Lower lobe of right lung (tissue), 2 donors: ENCODE measurements at regions of chr7 and their contacts with region 1.

Region 1: DNA sequence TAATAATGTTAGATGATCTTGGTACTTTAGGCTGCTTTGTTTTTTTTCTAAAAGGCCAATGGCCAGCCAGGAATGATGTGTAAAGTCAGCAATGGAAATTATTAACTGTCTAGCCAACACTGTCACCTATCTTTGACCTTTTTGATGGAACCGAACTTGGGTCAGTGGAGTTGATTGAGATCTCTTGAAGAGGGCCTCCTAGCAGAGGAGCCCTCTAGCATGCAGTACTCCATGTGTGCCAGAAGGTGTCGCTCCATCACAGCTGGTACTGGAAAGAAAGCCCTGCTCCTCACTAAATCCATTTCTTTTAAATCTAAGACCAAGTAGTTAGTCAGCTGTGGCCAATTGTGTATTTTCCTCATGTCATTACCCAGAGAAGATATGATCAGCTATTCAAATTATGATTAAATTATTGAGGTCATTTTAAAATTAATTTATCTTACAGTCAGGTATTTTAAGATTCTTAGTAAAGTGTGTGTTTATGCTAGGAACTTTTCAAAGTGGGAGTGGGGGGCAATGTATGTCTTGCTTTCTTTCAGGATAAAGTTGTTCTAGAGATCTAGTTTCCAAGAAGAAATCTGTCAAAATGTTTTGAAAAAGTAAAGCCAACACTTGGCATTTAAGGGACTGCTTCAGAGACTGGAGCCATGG is 33.1 kb upstream of the CROT start:
- DNase-seq: no peak
- ATAC-seq: peak; percentile 80 to 92
- H3K4me3 ChIP-seq: no peak overlapping the region
- H3K27ac ChIP-seq: no peak overlapping the region
- H3K4me1 ChIP-seq: no peaks in the 10 kb centered on the region
- H3K27me3 ChIP-seq: no peaks in the 10 kb centered on the region
- CTCF ChIP-seq: peak; percentile 85

Region 2: DNA sequence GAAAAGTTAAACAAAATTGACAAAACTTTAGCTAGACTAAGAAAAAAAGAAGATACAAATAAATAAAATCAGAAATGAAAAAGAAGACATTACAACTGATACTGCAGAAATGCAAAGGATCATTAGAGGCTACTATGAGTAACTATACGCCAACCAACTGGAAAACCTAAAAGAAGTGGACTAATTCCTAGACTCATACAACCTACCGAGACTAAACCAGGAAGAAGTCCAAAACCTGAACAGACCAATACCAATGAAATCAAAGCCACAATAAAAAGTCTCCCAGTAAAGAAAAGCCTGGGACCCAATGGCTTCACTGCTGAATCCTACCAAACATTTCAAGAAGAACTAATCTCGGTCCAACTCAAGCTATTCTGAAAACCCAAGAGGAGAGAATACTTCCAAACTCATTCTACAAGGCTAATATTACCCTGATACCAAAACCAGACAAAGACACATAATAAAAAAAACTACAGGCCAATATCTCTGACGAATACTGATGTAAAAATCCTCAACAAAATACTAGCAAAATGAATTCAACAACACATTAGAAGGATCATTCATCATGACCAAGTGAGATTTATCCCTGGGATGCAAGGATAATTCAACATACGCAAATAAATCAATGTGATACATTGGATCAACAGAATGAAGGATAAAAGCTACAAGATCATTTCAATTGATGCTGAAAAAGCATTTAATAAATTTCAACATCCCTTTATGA is 273.2 kb before region 1 on chr7:
- intact Hi-C with region 1: no loop called
- DNase-seq: no peak
- ATAC-seq: no peak
- H3K4me3 ChIP-seq: peak overlapping the region; percentile 29
- H3K27ac ChIP-seq: no peak overlapping the region
- H3K4me1 ChIP-seq: no peaks in the 10 kb centered on the region
- H3K27me3 ChIP-seq: no peaks in the 10 kb centered on the region
- CTCF ChIP-seq: no peak

Region 3: GRCh38 chr7:87416682-87417587 is 104.6 kb after region 1 on chr7:
- intact Hi-C with region 1: loop called (anchors 5 kb)
- DNase-seq: no peak
- ATAC-seq: peak; percentile 47 to 70
- H3K4me3 ChIP-seq: no peak overlapping the region
- H3K27ac ChIP-seq: no peak overlapping the region
- H3K4me1 ChIP-seq: no peaks in the 10 kb centered on the region
- H3K27me3 ChIP-seq: no peaks in the 10 kb centered on the region
- CTCF ChIP-seq: peak; percentile 60

Region 4: GRCh38 chr7:87715545-87715944 is 403.2 kb after region 1 on chr7:
- intact Hi-C with region 1: no loop called
- DNase-seq: no peak
- ATAC-seq: no peak
- H3K4me3 ChIP-seq: no peak overlapping the region
- H3K27ac ChIP-seq: no peak overlapping the region
- H3K4me1 ChIP-seq: no peaks in the 10 kb centered on the region
- H3K27me3 ChIP-seq: no peaks in the 10 kb centered on the region
- CTCF ChIP-seq: no peak

Region 5: GRCh38 chr7:87968021-87968420 is 655.7 kb after region 1 on chr7:
- intact Hi-C with region 1: no loop called
- DNase-seq: no peak
- ATAC-seq: no peak
- H3K4me3 ChIP-seq: no peak overlapping the region
- H3K27ac ChIP-seq: no peak overlapping the region
- H3K4me1 ChIP-seq: no peaks in the 10 kb centered on the region
- H3K27me3 ChIP-seq: no peaks in the 10 kb centered on the region
- CTCF ChIP-seq: no peak